ENCODE measurements at regions of chr7 and their contacts with region 1.

Region 1: DNA sequence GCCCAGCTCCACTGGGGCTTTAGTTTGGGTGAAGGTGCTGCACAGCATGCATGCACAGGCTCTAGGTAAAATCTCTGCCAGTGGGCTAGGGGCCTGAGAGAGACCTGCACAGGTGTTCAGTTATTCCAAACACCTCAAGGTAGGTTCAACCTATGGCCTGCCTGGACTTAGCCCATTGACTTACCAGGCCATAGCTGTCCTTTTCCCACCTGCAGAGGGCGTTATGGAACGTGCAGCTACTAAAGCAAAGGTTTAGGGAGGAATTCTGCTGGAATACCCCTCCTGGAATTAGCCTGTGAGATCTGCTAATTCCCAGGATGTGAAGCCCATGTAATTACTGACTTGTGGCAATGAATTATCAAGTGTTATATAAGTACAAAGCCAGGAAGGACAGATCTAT is 3.6 kb downstream of the VWC2 start:
- DNase-seq: peak in 4 of 5 donors; percentile 34 to 60 (median 46)
- H3K4me3 ChIP-seq: no peak overlapping the region
- H3K27ac ChIP-seq: peak overlapping the region in 1 of 2 donors; percentile 10
- H3K4me1 ChIP-seq: peaks cover 4% of the 10 kb centered on the region
- H3K27me3 ChIP-seq: no peaks in the 10 kb centered on the region
- CTCF ChIP-seq: no peak
- EP300 ChIP-seq: no peak
- POLR2A ChIP-seq: no peak

Region 2: GRCh38 chr7:49483142-49483541 is 293.9 kb before region 1 on chr7:
- intact Hi-C with region 1: loop called in 1 of 4 experiments (anchors 10 kb)
- DNase-seq: no peak
- H3K4me3 ChIP-seq: no peak overlapping the region
- H3K27ac ChIP-seq: no peak overlapping the region
- H3K4me1 ChIP-seq: peaks cover 2% of the 10 kb centered on the region
- H3K27me3 ChIP-seq: no peaks in the 10 kb centered on the region
- CTCF ChIP-seq: no peak
- EP300 ChIP-seq: no peak
- POLR2A ChIP-seq: no peak

Region 3: DNA sequence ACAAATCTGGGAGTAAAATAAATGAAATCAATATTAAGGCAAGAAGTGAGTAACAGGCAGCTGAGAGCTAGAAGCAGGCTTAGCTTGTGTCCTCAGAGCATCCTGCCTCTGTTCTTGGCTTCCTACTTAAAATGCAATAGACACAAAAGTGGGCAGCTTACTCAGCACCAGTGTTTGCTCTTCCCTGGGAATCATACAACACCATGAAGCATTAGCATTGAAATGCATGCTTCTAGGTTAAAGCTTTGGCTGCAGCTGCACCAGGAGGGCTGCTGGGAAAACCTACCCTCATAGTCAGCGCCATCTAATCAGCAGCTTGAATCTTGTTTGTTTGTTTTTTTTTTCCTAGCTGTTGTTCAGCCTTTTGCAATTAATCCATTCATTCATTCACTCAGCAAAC is 107.7 kb before region 1 on chr7:
- intact Hi-C with region 1: no loop called
- DNase-seq: no peak
- H3K4me3 ChIP-seq: no peak overlapping the region
- H3K27ac ChIP-seq: no peak overlapping the region
- H3K4me1 ChIP-seq: no peaks in the 10 kb centered on the region
- H3K27me3 ChIP-seq: no peaks in the 10 kb centered on the region
- CTCF ChIP-seq: no peak
- EP300 ChIP-seq: no peak
- POLR2A ChIP-seq: no peak

Region 4: DNA sequence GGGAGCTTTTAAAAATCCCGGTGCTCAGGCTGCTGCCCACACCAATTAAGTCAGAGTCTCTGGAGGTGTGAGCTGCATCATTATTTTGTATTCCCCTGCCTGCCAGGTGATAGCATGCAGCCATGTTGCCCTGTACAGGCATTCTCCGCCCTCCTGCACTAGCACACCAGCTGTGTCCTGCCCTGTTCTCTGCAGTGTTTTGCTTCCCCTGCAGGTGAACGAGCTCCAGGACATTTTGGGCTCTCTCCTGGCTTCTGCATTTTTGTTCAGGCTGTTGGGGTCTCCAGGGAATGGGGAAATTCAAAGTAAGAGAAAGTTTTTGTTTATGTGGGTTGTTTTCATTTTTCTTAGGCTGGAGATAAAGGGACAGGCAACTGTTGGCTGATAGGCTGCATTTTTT is 1810.6 kb after region 1 on chr7:
- intact Hi-C with region 1: no loop called
- DNase-seq: no peak
- H3K4me3 ChIP-seq: no peak overlapping the region
- H3K27ac ChIP-seq: no peak overlapping the region
- H3K4me1 ChIP-seq: peaks cover 1% of the 10 kb centered on the region
- H3K27me3 ChIP-seq: no peaks in the 10 kb centered on the region
- CTCF ChIP-seq: no peak
- EP300 ChIP-seq: no peak
- POLR2A ChIP-seq: no peak

Measured in ovary (tissue), 10 donors.